ENCODE measurements at regions of chr2 and their contacts with region 1.

Region 1: DNA sequence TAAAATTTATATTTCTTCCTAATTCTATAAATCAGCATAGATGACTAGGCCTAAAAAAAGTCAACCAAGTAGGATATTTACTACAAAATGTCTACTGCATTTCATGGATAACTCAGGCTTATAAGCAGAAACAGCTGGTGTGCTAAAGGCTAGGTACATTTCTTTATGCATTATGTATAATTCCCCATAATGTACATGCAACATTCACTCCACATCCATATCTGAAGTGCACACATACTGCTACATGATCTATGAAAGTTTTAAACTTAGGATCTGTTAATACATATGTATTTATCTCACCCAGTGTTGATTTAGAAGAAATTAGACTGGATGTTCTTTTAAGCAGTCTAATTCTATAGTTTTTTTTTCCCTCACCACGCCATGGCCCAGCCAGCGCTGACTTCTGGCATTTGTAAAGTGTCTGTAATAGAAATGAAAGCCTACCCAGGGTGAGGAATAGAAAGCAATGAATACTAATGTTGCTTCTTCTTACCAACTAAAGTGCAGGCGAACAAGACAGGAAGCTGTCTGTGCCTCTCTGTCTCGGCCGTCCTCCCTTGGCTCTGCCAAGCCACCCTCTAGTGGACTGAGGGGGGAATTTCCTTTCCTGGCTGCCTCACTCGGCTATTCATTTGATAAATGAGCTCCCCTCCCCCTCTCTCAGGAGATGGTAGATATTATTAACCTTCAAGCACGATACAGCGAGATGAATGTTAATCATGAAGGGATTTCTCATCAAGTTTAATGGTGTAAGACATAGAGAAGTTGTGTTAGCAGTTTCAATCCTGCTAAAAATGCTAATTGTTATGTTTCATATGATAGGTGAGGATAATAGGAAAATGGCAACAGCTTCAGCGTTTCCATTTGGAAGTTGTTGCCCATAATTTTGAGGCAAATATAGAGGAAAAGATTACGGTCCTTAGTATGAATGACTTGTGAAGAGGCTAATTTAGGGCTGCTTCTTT is 384.5 kb downstream of the MTX2 start:
- DNase-seq: peak; percentile 45
- ATAC-seq: peak; percentile 31
- H3K4me3 ChIP-seq: no peak overlapping the region
- H3K4me3 Mint-ChIP-seq: no peak overlapping the region
- H3K27ac ChIP-seq: no peak overlapping the region
- H3K27ac Mint-ChIP-seq: no peak overlapping the region
- H3K4me1 ChIP-seq: peaks cover 0 to 3% of the 10 kb centered on the region in 2 donors
- H3K4me1 Mint-ChIP-seq: peaks cover 3% of the 10 kb centered on the region
- H3K27me3 ChIP-seq: peaks cover 0 to 7% (median 3%) of the 10 kb centered on the region in 4 experiments
- H3K27me3 Mint-ChIP-seq: peaks cover 42% of the 10 kb centered on the region
- CTCF ChIP-seq: peak; percentile 51

Region 2: DNA sequence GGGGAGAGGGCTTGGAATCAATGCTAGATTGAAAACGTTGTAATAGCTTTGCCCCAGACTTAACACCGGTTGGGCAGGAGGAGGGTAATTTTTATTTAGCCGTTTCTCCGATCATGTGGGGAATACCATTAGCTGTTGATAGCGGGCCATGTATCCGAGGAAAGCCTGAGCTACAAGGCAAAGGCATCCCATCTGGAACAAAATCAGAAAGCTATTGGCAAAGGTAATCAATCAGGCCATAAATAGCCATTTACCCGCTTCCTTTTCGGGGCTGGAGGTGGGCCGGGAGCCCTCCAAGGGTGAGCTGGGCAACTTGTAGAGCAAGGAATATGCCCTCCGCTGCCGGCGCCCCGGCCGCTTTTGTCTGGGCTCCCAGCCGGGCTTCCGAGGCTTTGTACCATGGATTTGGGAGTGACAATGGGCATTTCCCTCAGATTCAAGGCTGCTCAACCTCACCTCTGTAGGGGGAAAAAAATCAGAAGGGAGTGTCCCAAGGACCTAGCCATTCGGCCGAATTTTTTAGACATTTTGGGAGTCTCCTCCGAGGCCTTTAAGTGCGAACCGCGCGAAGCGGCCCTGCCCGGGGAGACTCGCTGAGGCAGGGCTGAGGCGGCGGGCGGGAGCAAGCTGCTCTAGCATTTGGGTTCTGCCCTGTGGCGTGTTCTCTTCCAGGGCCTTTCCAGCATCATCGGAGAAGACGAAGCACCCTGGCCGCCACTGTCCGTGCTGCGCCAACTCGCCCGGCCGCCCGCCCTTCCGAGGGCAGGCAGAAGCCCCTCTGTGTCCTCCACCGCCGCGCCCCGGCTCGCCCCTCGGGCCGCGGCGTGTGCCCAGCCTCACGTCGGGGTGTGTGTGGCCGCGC is 532.3 kb before region 1 on chr2:
- CTCF ChIA-PET with region 1: interaction called, 100 read pairs
- POLR2A ChIA-PET with region 1: no interaction called
- intact Hi-C with region 1: no loop called
- DNase-seq: no peak
- ATAC-seq: no peak
- H3K4me3 ChIP-seq: no peak overlapping the region
- H3K4me3 Mint-ChIP-seq: no peak overlapping the region
- H3K27ac ChIP-seq: no peak overlapping the region
- H3K27ac Mint-ChIP-seq: no peak overlapping the region
- H3K4me1 ChIP-seq: peaks cover 5 to 34% of the 10 kb centered on the region in 2 donors
- H3K4me1 Mint-ChIP-seq: peaks cover 11% of the 10 kb centered on the region
- H3K27me3 ChIP-seq: peaks cover 0 to 95% (median 75%) of the 10 kb centered on the region in 4 experiments
- H3K27me3 Mint-ChIP-seq: peaks cover 78% of the 10 kb centered on the region
- CTCF ChIP-seq: no peak

Region 3: GRCh38 chr2:176140513-176141317 is 513.0 kb before region 1 on chr2:
- CTCF ChIA-PET with region 1: interaction called, 13 read pairs
- POLR2A ChIA-PET with region 1: no interaction called
- intact Hi-C with region 1: no loop called
- DNase-seq: peak; percentile 74
- ATAC-seq: peak; percentile 73
- H3K4me3 ChIP-seq: peak overlapping the region in 2 of 5 experiments; percentile 29 to 32
- H3K4me3 Mint-ChIP-seq: peak overlapping the region; percentile 42
- H3K27ac ChIP-seq: no peak overlapping the region
- H3K27ac Mint-ChIP-seq: no peak overlapping the region
- H3K4me1 ChIP-seq: peaks cover 19 to 38% of the 10 kb centered on the region in 2 donors
- H3K4me1 Mint-ChIP-seq: peaks cover 23% of the 10 kb centered on the region
- H3K27me3 ChIP-seq: peaks cover 0 to 90% (median 68%) of the 10 kb centered on the region in 4 experiments
- H3K27me3 Mint-ChIP-seq: peaks cover 76% of the 10 kb centered on the region
- CTCF ChIP-seq: peak; percentile 61

Region 4: GRCh38 chr2:176638167-176639015 is 15.4 kb before region 1 on chr2:
- CTCF ChIA-PET with region 1: interaction called, 19 read pairs
- POLR2A ChIA-PET with region 1: no interaction called
- intact Hi-C with region 1: no loop called
- DNase-seq: peak; percentile 65
- ATAC-seq: peak; percentile 51
- H3K4me3 ChIP-seq: peak overlapping the region in 4 of 5 experiments; percentile 31 to 62 (median 50)
- H3K4me3 Mint-ChIP-seq: peak overlapping the region; percentile 73
- H3K27ac ChIP-seq: no peak overlapping the region
- H3K27ac Mint-ChIP-seq: no peak overlapping the region
- H3K4me1 ChIP-seq: peaks cover 11 to 12% of the 10 kb centered on the region in 2 donors
- H3K4me1 Mint-ChIP-seq: peaks cover 8% of the 10 kb centered on the region
- H3K27me3 ChIP-seq: peaks cover 0 to 50% (median 39%) of the 10 kb centered on the region in 4 experiments
- H3K27me3 Mint-ChIP-seq: peaks cover 66% of the 10 kb centered on the region
- CTCF ChIP-seq: peak; percentile 72